PC-9 (cell line): ENCODE measurements at regions of chr5 and their contacts with region 1.

Region 1: DNA sequence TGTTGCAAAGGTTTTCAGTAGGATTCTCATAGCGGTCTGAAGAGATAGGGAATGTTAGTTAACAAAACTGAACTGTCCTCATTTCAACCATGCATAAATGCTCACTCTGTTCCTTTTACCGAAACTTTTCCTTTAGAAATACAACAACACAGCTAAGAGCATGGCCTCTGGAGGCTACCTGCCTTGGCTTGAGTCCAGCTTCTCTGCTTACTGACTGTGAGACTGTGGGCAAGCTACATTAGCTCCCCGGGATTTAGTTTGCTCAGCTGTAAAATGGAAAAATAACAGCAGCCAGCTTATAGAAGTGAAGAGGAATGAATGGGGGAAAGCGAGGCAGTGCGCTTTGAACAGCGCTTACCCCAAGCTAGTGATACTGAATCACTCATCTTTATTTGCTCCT is 507.9 kb upstream of the DAP start:
- DNase-seq: no peak
- H3K4me3 ChIP-seq: no peak overlapping the region
- H3K27ac ChIP-seq: no peak overlapping the region
- H3K4me1 ChIP-seq: no peaks in the 10 kb centered on the region
- H3K27me3 ChIP-seq: peaks cover 27% of the 10 kb centered on the region
- CTCF ChIP-seq: no peak

Region 2: DNA sequence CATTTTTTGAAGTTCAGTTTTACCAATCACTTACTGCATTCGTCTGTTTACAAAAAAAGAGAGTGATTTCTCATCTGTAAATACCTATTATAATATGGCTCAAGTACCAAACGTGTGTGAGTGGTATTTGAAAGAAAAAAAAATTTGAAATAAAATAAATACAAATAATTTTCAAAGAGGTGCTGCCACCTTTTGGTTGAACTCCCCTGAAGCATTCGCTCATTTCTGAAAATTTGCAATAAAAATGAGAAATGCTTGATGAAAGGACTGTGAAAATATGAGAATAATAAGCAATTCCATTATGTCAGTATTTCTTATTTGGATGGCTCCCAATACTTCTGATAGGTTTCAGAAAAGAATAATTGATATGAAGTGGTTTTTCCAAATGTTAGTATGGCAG is 225.4 kb after region 1 on chr5:
- CTCF ChIA-PET with region 1: no interaction called
- POLR2A ChIA-PET with region 1: no interaction called
- intact Hi-C with region 1: loop called (anchors 2 kb)
- DNase-seq: no peak
- H3K4me3 ChIP-seq: no peak overlapping the region
- H3K27ac ChIP-seq: no peak overlapping the region
- H3K4me1 ChIP-seq: no peaks in the 10 kb centered on the region
- H3K27me3 ChIP-seq: no peaks in the 10 kb centered on the region
- CTCF ChIP-seq: peak; percentile 76

Region 3: DNA sequence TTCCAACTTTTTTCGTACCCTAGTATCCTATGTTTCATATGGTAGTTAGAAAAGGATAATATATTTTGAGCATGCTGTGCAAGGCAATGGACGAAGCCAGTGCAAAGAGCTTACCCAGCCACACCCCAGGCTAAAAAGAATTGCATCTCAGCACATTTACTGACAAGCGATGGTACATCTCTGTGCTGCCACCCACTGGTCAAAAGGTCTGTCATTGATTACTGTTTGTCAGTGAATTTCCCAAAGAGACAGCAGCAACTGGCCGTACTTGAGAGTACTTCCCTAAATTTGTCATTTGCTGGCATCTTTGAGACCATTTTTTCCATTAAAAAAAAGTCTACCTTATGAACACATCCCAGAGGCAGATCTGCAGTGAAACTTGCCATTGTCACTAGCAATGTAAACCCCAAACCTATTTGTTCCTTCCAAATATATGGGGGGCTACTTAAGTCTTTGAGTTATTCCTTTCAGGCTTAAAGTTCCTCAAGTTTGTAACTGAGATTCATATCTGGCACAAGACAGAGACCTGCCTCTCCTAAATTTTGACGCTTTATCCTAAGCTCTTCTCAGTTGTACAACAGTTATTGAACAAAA is 451.1 kb after region 1 on chr5:
- CTCF ChIA-PET with region 1: no interaction called
- POLR2A ChIA-PET with region 1: no interaction called
- intact Hi-C with region 1: loop called (anchors 2 kb)
- DNase-seq: peak in 1 of 2 experiments; percentile 44
- H3K4me3 ChIP-seq: no peak overlapping the region
- H3K27ac ChIP-seq: no peak overlapping the region
- H3K4me1 ChIP-seq: no peaks in the 10 kb centered on the region
- H3K27me3 ChIP-seq: no peaks in the 10 kb centered on the region
- CTCF ChIP-seq: peak; percentile 57

Region 4: GRCh38 chr5:11822601-11823000 is 553.7 kb after region 1 on chr5:
- CTCF ChIA-PET with region 1: no interaction called
- POLR2A ChIA-PET with region 1: no interaction called
- intact Hi-C with region 1: no loop called
- DNase-seq: no peak
- H3K4me3 ChIP-seq: no peak overlapping the region
- H3K27ac ChIP-seq: no peak overlapping the region
- H3K4me1 ChIP-seq: no peaks in the 10 kb centered on the region
- H3K27me3 ChIP-seq: peaks cover 21% of the 10 kb centered on the region
- CTCF ChIP-seq: no peak

Region 5: GRCh38 chr5:12023614-12024241 is 754.8 kb after region 1 on chr5:
- CTCF ChIA-PET with region 1: no interaction called
- POLR2A ChIA-PET with region 1: no interaction called
- intact Hi-C with region 1: loop called (anchors 2 kb)
- DNase-seq: no peak
- H3K4me3 ChIP-seq: no peak overlapping the region
- H3K27ac ChIP-seq: no peak overlapping the region
- H3K4me1 ChIP-seq: no peaks in the 10 kb centered on the region
- H3K27me3 ChIP-seq: no peaks in the 10 kb centered on the region
- CTCF ChIP-seq: peak; percentile 83